Right ventricle myocardium superior (tissue), 1 donor: ENCODE measurements at regions of chr9 and their contacts with region 1.

Region 1: GRCh38 chr9:100598641-100599145 is 20.8 kb downstream of the CAVIN4 start:
- DNase-seq: peak; percentile 91
- ATAC-seq: peak; percentile 89

Region 2: GRCh38 chr9:100352727-100353505 is 245.8 kb before region 1 on chr9 and contains the start of gene TEX10:
- intact Hi-C with region 1: loop called (anchors 10 kb)
- DNase-seq: peak; percentile 94
- ATAC-seq: peak; percentile 99
- total RNA-seq, gene TEX10: 8.0 TPM

Region 3: DNA sequence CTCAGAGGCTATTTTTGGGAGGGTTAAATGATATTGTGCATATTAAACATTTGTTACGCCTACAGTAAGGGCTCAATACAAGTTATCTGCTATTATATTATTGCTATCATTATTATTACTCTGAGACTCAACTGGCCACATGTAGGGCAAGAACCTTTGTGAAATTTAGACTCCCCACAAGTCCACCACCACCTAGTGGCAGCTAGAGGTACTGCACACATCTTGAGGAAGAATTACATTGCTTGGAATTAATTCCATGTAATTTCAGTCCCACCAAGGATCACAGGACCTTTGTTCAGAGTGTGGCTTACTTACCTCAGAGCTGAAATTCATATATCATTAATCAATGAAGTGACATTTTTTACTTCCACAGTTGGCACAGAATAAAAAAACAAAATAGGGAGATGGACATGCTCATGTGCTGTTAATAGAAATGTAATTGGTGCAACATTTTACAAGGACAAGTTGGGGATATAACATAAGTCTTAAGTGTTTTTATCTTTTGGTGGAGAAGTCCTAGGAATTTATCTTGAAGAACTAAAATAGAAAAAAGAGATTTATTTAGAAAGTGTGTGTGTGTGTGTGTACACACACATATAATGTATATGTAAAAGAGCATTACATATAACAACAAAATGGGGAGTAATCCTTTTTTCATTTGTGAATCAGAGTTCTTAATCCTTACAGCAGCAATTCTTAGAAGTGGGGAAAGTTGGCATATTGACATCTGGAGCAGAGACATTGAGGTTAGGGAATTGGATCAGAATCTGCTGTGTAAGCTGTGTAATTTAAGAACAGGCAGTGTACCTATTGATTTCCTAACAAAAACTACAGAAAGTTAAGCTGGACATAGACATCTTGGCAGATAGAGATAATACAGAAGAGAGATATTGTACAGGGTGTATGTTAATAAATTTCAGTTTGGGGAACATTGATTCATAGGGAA is 160.6 kb before region 1 on chr9:
- intact Hi-C with region 1: loop called (anchors 10 kb)
- DNase-seq: peak; percentile 47
- ATAC-seq: peak; percentile 67

Region 4: DNA sequence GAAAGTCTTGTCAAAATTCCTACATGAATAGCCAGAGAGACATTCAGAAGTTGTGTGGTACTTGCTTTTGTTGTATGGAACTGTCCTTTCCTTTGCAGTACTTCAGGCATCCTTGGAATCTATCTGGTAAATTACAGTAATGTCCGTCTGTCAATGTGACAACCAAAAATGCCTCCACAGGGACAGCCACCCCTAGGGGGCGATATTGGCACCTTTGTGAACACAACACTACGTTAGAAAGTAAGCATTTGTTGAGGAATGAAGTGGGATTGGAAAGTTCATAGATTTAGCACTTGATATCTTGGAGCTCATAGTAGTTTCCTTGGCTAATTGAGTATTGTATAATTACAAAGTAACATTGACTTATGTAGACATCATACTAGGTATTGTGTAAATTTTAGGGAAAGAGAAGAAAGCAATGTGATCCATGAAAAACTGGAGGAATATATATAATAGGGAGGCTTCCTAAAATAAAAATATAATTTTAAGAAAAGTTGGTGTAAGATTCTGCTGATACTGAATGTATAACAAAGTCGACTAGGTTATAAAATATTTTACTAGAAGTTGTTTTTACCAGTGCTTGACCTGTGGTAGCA is 93.0 kb before region 1 on chr9:
- intact Hi-C with region 1: loop called (anchors 2 kb)
- DNase-seq: peak; percentile 78
- ATAC-seq: no peak

Region 5: DNA sequence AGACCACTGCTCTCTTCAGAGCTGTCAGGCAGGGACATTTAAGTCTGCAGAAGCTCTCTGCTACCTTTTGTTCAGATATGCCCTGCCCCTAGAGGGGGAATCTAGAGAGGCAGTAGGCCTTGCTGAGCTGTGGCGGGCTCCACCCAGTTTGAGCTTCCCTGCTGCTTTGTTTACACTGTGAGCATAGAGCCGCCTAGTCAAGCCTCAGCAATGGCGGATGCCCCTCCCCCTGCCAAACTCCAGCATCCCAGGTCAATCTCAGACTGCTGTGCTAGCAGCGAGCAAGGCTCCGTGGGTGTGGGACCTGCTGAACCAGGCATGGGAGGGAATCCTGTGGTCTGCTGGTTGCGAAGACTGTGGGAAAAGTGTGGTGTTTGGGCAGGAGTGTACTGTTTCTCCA is 39.1 kb after region 1 on chr9:
- intact Hi-C with region 1: no loop called
- DNase-seq: no peak
- ATAC-seq: no peak

Region 6: DNA sequence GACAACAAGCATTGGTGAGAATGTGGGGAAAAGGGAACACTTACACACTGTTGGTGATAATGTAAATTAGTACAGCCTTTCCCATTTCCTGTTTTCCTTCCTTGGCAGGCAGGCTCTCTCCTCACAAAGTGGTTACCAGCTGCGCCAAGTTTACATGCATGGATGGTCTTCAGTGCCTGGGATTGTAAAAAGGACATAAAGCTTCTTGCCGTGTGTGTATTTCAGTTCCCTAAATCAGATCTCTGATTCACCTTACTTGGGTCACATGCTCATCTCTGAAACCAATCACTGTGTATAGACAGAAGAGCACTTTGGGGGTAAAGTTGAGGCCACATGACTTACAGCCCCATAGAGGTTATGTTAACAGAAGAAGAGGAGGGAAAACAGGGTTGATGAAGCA is 72.0 kb after region 1 on chr9:
- intact Hi-C with region 1: no loop called
- DNase-seq: no peak
- ATAC-seq: no peak